ENCODE measurements at regions of chr11 and their contacts with region 1.

Region 1: GRCh38 chr11:63945477-63946163 is 6.8 kb downstream of the NAA40 start:
- DNase-seq: peak; percentile 75 to 82
- ATAC-seq: peak; percentile 98 to 99
- H3K4me3 ChIP-seq: no peak overlapping the region
- H3K27ac ChIP-seq: 0 out of 6 replicates have a peak overlapping the region, but pooled peaks of 1 of the 2 experiments have one; percentile 10
- H3K4me1 ChIP-seq: peaks cover 9% of the 10 kb centered on the region; the same call in 2 of the 3 replicates
- CTCF ChIP-seq: peak; percentile 71
- EP300 ChIP-seq: no peak
- POLR2A ChIP-seq: no peak
- RAD21 ChIP-seq: peak; percentile 79 to 81

Region 2: GRCh38 chr11:63768237-63769043 is 177.2 kb before region 1 on chr11 and contains the start of gene ZFTA:
- CTCF ChIA-PET with region 1: interaction called, 25 read pairs
- POLR2A ChIA-PET with region 1: no interaction called
- DNase-seq: peak; percentile 51 to 68
- ATAC-seq: peak; percentile 50 to 59
- H3K4me3 ChIP-seq: peak within 1 kb of the TSS; percentile 63
- H3K27ac ChIP-seq: peak within 1 kb of the TSS; percentile 89 to 99
- H3K4me1 ChIP-seq: peaks cover 30% of the 10 kb centered on the region
- CTCF ChIP-seq: peak; percentile 95
- EP300 ChIP-seq: no peak
- POLR2A ChIP-seq: no peak
- RAD21 ChIP-seq: peak; percentile 34 to 81; a peak in 4 of 5 replicates
- polyA plus RNA-seq, gene ZFTA: 2.4 and 3.0 TPM in 2 replicates

Region 3: GRCh38 chr11:63845303-63845702 is 100.3 kb before region 1 on chr11:
- CTCF ChIA-PET with region 1: interaction called, 236 read pairs
- POLR2A ChIA-PET with region 1: no interaction called
- DNase-seq: peak in 1 of 2 experiments; percentile 68
- ATAC-seq: peak; percentile 67 to 81
- H3K4me3 ChIP-seq: no peak overlapping the region
- H3K27ac ChIP-seq: peak overlapping the region; percentile 58 to 70; a peak in 5 of 6 replicates
- H3K4me1 ChIP-seq: peaks cover 47% of the 10 kb centered on the region
- CTCF ChIP-seq: no peak
- EP300 ChIP-seq: no peak
- POLR2A ChIP-seq: no peak
- RAD21 ChIP-seq: no peak

Region 4: DNA sequence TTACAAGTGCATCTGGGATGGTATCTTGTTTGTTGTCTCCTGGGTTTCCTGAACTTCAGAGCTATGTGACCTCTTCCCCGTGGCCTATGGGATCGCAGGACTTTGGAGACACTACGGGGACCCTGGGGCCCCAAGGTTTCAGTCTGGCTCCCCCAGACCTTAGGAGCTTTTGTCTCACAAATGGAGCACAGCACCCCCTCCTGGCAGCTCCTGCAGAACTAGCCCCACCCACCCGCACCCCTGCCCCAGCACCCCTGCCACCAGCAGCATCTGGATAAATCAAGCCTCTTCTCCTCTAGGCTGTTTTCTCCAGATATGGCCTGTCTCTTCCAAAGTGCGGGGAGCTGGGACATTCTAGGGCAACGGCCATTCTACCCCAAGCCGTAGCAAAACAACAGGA is 39.0 kb before region 1 on chr11:
- CTCF ChIA-PET with region 1: interaction called, 19 read pairs
- POLR2A ChIA-PET with region 1: no interaction called
- DNase-seq: no peak
- ATAC-seq: peak in 1 of 2 experiments; percentile 30; a peak in 3 of 6 replicates
- H3K4me3 ChIP-seq: no peak overlapping the region
- H3K27ac ChIP-seq: no peak overlapping the region
- H3K4me1 ChIP-seq: 0 out of 3 replicates have a peak, but pooled peaks cover 4% of the 10 kb centered on the region
- CTCF ChIP-seq: peak; percentile 40
- EP300 ChIP-seq: no peak
- POLR2A ChIP-seq: no peak
- RAD21 ChIP-seq: peak; percentile 17 to 42; a peak in 3 of 5 replicates

Region 5: DNA sequence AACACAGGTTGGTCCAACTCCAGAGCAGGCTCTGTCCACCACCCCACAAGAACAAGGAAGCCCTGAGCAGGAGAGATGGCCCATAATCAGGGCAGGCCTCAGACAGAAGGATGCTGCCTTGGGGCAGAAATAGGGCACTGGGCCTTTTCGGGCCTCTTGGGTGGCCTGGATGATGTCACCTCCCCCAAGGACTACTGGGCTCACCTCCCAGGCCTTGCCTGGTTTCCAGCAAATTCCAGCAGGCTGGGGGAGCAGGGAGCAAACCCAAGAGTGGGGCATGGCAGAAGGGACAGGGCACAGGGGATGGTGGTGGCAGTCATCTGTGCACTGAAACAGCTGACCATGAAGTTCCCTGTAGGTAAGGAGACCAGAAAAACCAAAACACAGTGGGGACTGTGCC is 12.2 kb before region 1 on chr11:
- CTCF ChIA-PET with region 1: interaction called, 20 read pairs
- POLR2A ChIA-PET with region 1: no interaction called
- DNase-seq: no peak
- ATAC-seq: no peak
- H3K4me3 ChIP-seq: no peak overlapping the region
- H3K27ac ChIP-seq: 0 out of 6 replicates have a peak overlapping the region, but pooled peaks of 1 of the 2 experiments have one; percentile 25
- H3K4me1 ChIP-seq: peaks cover 5% of the 10 kb centered on the region
- CTCF ChIP-seq: no peak
- EP300 ChIP-seq: no peak
- POLR2A ChIP-seq: no peak
- RAD21 ChIP-seq: no peak